Activated CD4-positive, alpha-beta T cell treated with anti-CD3 and anti-CD28 coated beads for 36 hours (primary cell): ENCODE measurements at regions of chr17 and their contacts with region 1.

Region 1: DNA sequence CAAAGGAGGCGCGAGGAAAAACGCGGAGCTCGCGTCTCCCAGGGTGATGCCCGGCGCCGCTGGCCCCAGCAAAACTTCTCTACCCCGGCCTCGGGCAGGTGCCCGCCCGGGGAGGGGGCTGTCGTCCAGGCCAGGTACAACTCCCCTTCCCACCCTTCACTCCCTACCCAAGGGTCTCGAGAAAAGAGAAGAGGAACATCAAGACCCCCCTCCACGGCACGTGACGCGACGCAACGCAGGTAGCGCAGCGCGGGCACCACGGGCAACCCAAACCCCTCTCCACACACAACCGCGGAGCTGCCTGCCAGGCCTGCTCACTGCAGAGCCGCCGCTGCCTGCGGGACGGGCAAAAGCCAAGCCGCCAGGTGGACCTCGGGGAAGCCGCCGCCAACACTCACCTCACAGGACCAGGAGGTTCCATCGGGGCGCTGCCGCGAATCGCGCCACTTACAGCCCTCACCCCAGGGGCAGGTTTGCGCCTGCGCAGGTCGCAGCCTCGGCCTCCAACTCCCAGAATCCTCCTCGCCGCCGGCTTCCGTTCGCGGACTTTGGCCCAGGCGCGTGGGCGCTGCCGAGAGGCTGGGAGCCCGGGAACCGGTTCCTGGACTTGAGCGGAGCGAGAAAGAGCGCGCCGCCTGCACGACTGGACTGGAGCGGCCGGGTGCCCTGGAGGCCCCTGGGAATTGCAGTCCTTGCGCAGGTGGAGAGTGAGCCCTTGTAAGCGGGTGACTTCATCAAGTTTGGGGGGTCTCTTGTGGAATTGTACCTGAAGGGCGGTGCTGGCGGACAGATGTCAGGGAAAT is at the start of gene ZNF232:
- DNase-seq: peak; percentile 97
- ATAC-seq: peak; percentile 93
- H3K4me3 Mint-ChIP-seq: peak within 1 kb of the TSS; percentile 83
- H3K27ac Mint-ChIP-seq: peak within 1 kb of the TSS; percentile 73
- H3K4me1 Mint-ChIP-seq: peaks cover 27% of the 10 kb centered on the region
- H3K27me3 Mint-ChIP-seq: peaks cover 10% of the 10 kb centered on the region
- total RNA-seq, gene ZNF232: 16.1 to 16.2 TPM

Region 2: GRCh38 chr17:4648741-4649140 is 462.9 kb before region 1 on chr17:
- CTCF ChIA-PET with region 1: no interaction called
- POLR2A ChIA-PET with region 1: no interaction called
- intact Hi-C with region 1: no loop called
- DNase-seq: no peak
- ATAC-seq: no peak
- H3K4me3 Mint-ChIP-seq: no peak overlapping the region
- H3K27ac Mint-ChIP-seq: no peak overlapping the region
- H3K4me1 Mint-ChIP-seq: no peaks in the 10 kb centered on the region
- H3K27me3 Mint-ChIP-seq: peaks cover 21% of the 10 kb centered on the region

Region 3: DNA sequence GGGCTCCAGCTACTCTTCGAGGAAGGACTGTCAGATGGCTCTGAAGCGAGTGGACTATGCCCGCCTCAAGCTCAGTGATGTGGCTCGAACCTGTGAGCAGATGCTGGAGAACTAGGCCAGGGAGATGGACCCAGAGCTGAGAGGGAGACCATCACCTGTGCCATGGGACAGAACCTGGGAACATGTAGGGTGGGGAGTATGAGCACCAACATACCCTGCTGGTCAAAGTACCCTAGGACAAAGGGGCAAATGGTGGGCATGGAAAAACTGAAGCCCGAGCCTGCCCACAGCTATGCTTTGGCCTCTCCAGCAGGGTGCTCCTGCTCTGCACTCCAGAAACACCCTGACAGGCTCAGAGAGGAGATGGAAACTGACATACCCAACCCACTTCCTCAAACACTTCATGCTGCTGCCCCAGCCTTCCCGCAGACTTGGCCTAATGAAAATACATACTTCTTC is 378.5 kb before region 1 on chr17:
- CTCF ChIA-PET with region 1: no interaction called
- POLR2A ChIA-PET with region 1: no interaction called
- intact Hi-C with region 1: loop called in 1 of 2 experiments (anchors 1 kb)
- DNase-seq: no peak
- ATAC-seq: no peak
- H3K4me3 Mint-ChIP-seq: no peak overlapping the region
- H3K27ac Mint-ChIP-seq: peak overlapping the region; percentile 17
- H3K4me1 Mint-ChIP-seq: peaks cover 39% of the 10 kb centered on the region
- H3K27me3 Mint-ChIP-seq: peaks cover under 1% of the 10 kb centered on the region

Region 4: GRCh38 chr17:4823373-4824089 is 288.1 kb before region 1 on chr17:
- CTCF ChIA-PET with region 1: no interaction called
- POLR2A ChIA-PET with region 1: no interaction called
- intact Hi-C with region 1: no loop called
- DNase-seq: no peak
- ATAC-seq: no peak
- H3K4me3 Mint-ChIP-seq: no peak overlapping the region
- H3K27ac Mint-ChIP-seq: no peak overlapping the region
- H3K4me1 Mint-ChIP-seq: no peaks in the 10 kb centered on the region
- H3K27me3 Mint-ChIP-seq: no peaks in the 10 kb centered on the region

Region 5: DNA sequence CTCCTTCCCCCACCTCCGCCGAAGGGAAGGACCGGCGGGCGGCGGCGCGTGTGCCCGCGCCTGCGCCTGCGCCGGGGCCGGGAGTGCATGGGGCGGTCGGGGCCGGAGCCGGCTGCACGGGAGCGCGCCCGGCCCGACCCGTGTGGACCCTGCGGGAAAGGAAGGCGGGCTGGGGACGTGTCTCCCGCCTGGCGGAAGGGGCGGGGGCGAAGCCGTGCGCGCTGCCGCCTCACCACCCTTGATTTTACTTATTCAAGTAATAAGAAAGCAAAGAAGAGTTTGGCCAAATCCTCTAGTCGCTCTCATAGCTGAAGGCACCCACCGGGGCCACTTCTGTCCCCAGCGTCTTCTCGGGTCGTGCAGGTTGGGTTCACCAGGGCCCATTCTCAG is 162.7 kb before region 1 on chr17:
- CTCF ChIA-PET with region 1: no interaction called
- POLR2A ChIA-PET with region 1: no interaction called
- intact Hi-C with region 1: loop called in 1 of 2 experiments (anchors 5 kb)
- DNase-seq: peak; percentile 88
- ATAC-seq: peak; percentile 39
- H3K4me3 Mint-ChIP-seq: peak overlapping the region; percentile 99
- H3K27ac Mint-ChIP-seq: peak overlapping the region; percentile 100
- H3K4me1 Mint-ChIP-seq: peaks cover 34% of the 10 kb centered on the region
- H3K27me3 Mint-ChIP-seq: no peaks in the 10 kb centered on the region

Region 6: DNA sequence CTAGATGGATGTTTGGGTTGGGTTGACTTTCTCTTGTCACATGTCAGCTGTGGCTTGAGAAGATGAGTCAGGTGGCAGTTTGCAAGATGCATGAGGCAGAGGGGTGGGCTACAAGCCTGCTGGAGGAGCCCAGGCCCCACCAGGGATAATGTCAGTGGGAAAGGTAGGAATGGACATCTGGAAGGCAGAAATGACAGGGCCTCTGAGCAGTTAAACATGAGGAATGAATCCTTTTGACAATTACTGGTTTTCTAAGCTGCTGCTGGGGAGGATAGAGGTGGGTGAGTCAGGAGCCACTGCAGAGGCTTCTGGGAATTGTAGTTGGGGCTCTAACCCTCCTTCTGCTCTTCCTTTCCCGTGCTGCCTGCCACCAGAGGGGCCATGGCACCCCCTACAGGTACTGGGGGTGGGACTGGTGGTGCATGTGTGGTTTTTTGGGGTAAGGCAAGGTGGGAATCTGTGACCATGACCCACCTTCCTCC is 92.1 kb before region 1 on chr17:
- CTCF ChIA-PET with region 1: no interaction called
- POLR2A ChIA-PET with region 1: no interaction called
- intact Hi-C with region 1: no loop called
- DNase-seq: peak; percentile 67
- ATAC-seq: peak; percentile 93
- H3K4me3 Mint-ChIP-seq: no peak overlapping the region
- H3K27ac Mint-ChIP-seq: peak overlapping the region; percentile 56
- H3K4me1 Mint-ChIP-seq: peaks cover 11% of the 10 kb centered on the region
- H3K27me3 Mint-ChIP-seq: no peaks in the 10 kb centered on the region

Region 7: GRCh38 chr17:5078106-5079028 is 33.2 kb before region 1 on chr17 and contains the start of gene ZFP3:
- CTCF ChIA-PET with region 1: interaction called, 7 read pairs
- POLR2A ChIA-PET with region 1: no interaction called
- intact Hi-C with region 1: loop called (anchors 1 to 2 kb)
- DNase-seq: peak; percentile 89
- ATAC-seq: peak; percentile 90
- H3K4me3 Mint-ChIP-seq: peak within 1 kb of the TSS; percentile 73
- H3K27ac Mint-ChIP-seq: peak within 1 kb of the TSS; percentile 95
- H3K4me1 Mint-ChIP-seq: peaks cover 30% of the 10 kb centered on the region
- H3K27me3 Mint-ChIP-seq: no peaks in the 10 kb centered on the region
- total RNA-seq, gene ZFP3: 2.2 to 2.8 TPM

Region 8: GRCh38 chr17:5281814-5282653 is 170.4 kb after region 1 on chr17 and contains the start of gene RABEP1:
- CTCF ChIA-PET with region 1: no interaction called
- POLR2A ChIA-PET with region 1: no interaction called
- intact Hi-C with region 1: loop called in 1 of 2 experiments (anchors 1 kb)
- DNase-seq: peak; percentile 97
- ATAC-seq: peak; percentile 81
- H3K4me3 Mint-ChIP-seq: peak within 1 kb of the TSS; percentile 86
- H3K27ac Mint-ChIP-seq: peak within 1 kb of the TSS; percentile 90
- H3K4me1 Mint-ChIP-seq: peaks cover 32% of the 10 kb centered on the region
- H3K27me3 Mint-ChIP-seq: no peaks in the 10 kb centered on the region
- total RNA-seq, gene RABEP1: 60.4 to 66.2 TPM

Region 9: DNA sequence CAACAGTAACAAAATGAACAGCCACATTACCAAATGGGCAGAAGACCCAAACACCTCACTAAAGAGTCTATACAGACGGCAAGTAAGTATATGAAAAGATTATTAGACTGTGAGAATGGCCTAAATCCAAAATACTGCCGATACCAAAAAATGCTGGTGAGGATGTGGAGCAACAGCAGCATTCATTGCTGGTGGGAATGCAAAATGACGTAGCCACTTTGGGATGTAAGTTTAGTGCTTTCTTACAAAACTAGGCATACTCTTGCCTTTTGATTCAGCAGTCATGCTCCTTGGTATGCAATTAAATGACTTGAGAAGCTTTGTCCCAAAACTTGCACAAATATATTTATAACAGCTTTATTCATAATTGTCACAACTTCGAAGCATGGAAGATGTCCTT is 214.2 kb after region 1 on chr17:
- CTCF ChIA-PET with region 1: no interaction called
- POLR2A ChIA-PET with region 1: no interaction called
- intact Hi-C with region 1: no loop called
- DNase-seq: no peak
- ATAC-seq: no peak
- H3K4me3 Mint-ChIP-seq: no peak overlapping the region
- H3K27ac Mint-ChIP-seq: no peak overlapping the region
- H3K4me1 Mint-ChIP-seq: peaks cover 29% of the 10 kb centered on the region
- H3K27me3 Mint-ChIP-seq: no peaks in the 10 kb centered on the region